ENCODE measurements at regions of chr1 and their contacts with region 1.

Region 1: DNA sequence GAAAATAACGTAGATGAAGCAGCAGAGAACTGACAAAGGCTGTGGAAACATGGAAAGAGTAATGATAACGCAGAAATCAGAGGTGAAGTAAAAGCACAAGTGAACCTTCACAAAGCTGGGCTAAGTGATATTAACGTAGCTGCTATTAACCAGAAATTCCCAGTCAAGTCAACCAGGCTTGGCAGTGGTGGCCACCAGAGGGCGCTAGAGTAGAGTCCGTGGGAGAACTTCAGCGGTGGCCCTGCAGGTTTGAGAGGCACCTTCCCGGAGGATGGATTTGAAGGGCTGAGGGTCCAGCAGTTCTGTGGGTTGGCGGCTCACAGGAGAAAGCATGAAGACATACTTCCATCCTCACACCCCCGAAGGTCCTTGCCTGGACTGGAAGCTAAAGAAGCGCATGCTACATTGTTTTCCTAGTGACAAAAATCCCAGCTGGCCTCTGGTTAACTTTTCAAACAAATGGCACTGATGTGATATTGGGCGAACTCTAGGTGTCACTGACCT is 81.7 kb upstream of the ZNF648 start:
- DNase-seq: peak; percentile 62 to 90 (median 80)
- ATAC-seq: peak; percentile 75
- H3K4me3 ChIP-seq: no peak overlapping the region
- H3K4me3 Mint-ChIP-seq: no peak overlapping the region
- H3K27ac ChIP-seq: no peak overlapping the region
- H3K27ac Mint-ChIP-seq: peak overlapping the region in 3 of 9 donors; percentile 5 to 8 (median 5)
- H3K4me1 ChIP-seq: no peaks in the 10 kb centered on the region
- H3K4me1 Mint-ChIP-seq: peaks cover 6 to 37% (median 11%) of the 10 kb centered on the region in 7 donors
- H3K27me3 ChIP-seq: no peaks in the 10 kb centered on the region
- H3K27me3 Mint-ChIP-seq: peaks cover 0 to 12% (median 5%) of the 10 kb centered on the region in 5 donors

Region 2: GRCh38 chr1:182129398-182129797 is 13.8 kb before region 1 on chr1:
- CTCF ChIA-PET with region 1: interaction called, 11 read pairs
- POLR2A ChIA-PET with region 1: no interaction called
- intact Hi-C with region 1: no loop called
- DNase-seq: no peak
- ATAC-seq: no peak
- H3K4me3 ChIP-seq: no peak overlapping the region
- H3K4me3 Mint-ChIP-seq: no peak overlapping the region
- H3K27ac ChIP-seq: no peak overlapping the region
- H3K27ac Mint-ChIP-seq: no peak overlapping the region
- H3K4me1 ChIP-seq: no peaks in the 10 kb centered on the region
- H3K4me1 Mint-ChIP-seq: no peaks in the 10 kb centered on the region
- H3K27me3 ChIP-seq: no peaks in the 10 kb centered on the region
- H3K27me3 Mint-ChIP-seq: peaks cover 0 to 8% (median 0%) of the 10 kb centered on the region in 5 donors

Region 3: DNA sequence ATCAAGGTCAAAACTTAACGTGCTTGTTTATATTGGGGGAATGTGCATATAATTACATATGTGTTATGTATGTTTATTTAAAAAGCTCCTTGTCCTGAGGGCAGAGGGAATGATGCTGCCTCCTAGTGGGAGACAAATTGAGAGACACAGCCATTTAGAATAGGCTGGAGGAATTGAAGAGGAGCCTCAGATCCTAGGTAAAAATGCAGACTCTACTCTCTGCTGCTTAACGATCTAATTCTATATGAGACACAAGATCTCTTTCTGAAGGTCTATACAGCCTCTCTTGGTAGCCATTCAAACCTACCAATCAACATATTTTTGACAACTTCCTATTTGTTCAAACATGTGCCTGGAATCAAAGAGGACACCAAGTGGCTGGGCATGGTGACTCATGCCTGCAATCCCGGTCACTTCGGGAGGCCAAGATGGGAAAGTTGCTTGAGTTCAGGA is 54.9 kb after region 1 on chr1:
- CTCF ChIA-PET with region 1: interaction called, 5 read pairs
- POLR2A ChIA-PET with region 1: no interaction called
- intact Hi-C with region 1: loop called in 1 of 2 experiments (anchors 5 kb)
- DNase-seq: no peak
- ATAC-seq: no peak
- H3K4me3 ChIP-seq: no peak overlapping the region
- H3K4me3 Mint-ChIP-seq: no peak overlapping the region
- H3K27ac ChIP-seq: no peak overlapping the region
- H3K27ac Mint-ChIP-seq: no peak overlapping the region
- H3K4me1 ChIP-seq: no peaks in the 10 kb centered on the region
- H3K4me1 Mint-ChIP-seq: peaks cover 0 to under 1% (median 0%) of the 10 kb centered on the region in 7 donors
- H3K27me3 ChIP-seq: no peaks in the 10 kb centered on the region
- H3K27me3 Mint-ChIP-seq: peaks cover 0 to 12% (median 5%) of the 10 kb centered on the region in 5 donors

Region 4: GRCh38 chr1:182259229-182259872 is 116.1 kb after region 1 on chr1:
- CTCF ChIA-PET with region 1: interaction called, 5 read pairs
- POLR2A ChIA-PET with region 1: no interaction called
- intact Hi-C with region 1: loop called in 1 of 2 experiments (anchors 1 kb)
- DNase-seq: peak; percentile 21 to 79 (median 65)
- ATAC-seq: peak; percentile 90
- H3K4me3 ChIP-seq: peak overlapping the region; percentile 2
- H3K4me3 Mint-ChIP-seq: peak overlapping the region; percentile 28 to 82 (median 75)
- H3K27ac ChIP-seq: peak overlapping the region; percentile 72
- H3K27ac Mint-ChIP-seq: peak overlapping the region; percentile 83 to 97 (median 91)
- H3K4me1 ChIP-seq: peaks cover 11 to 20% of the 10 kb centered on the region in 2 donors
- H3K4me1 Mint-ChIP-seq: peaks cover 23 to 50% (median 43%) of the 10 kb centered on the region in 7 donors
- H3K27me3 ChIP-seq: no peaks in the 10 kb centered on the region
- H3K27me3 Mint-ChIP-seq: no peaks in the 10 kb centered on the region

Region 5: GRCh38 chr1:182391362-182392044 is 248.3 kb after region 1 on chr1 and contains the start of gene GLUL:
- CTCF ChIA-PET with region 1: interaction called, 202 read pairs
- POLR2A ChIA-PET with region 1: interaction called, 16 read pairs
- intact Hi-C with region 1: loop called (anchors 1 kb)
- DNase-seq: peak; percentile 46 to 83 (median 63)
- ATAC-seq: peak; percentile 87
- H3K4me3 ChIP-seq: peak within 1 kb of the TSS; percentile 73
- H3K4me3 Mint-ChIP-seq: peak within 1 kb of the TSS; percentile 87 to 98 (median 94)
- H3K27ac ChIP-seq: peak within 1 kb of the TSS; percentile 64
- H3K27ac Mint-ChIP-seq: peak within 1 kb of the TSS; percentile 82 to 97 (median 89)
- H3K4me1 ChIP-seq: peaks cover 10 to 14% of the 10 kb centered on the region in 2 donors
- H3K4me1 Mint-ChIP-seq: peaks cover 17 to 45% (median 29%) of the 10 kb centered on the region in 7 donors
- H3K27me3 ChIP-seq: no peaks in the 10 kb centered on the region
- H3K27me3 Mint-ChIP-seq: peaks cover 0 to 25% (median 0%) of the 10 kb centered on the region in 5 donors
- total RNA-seq, gene GLUL: 66.2 to 357 (median 112) TPM

Region 6: GRCh38 chr1:182781841-182782586 is 638.8 kb after region 1 on chr1:
- CTCF ChIA-PET with region 1: no interaction called
- POLR2A ChIA-PET with region 1: no interaction called
- intact Hi-C with region 1: loop called (anchors 5 kb)
- DNase-seq: peak; percentile 33 to 72 (median 54)
- ATAC-seq: peak; percentile 84
- H3K4me3 ChIP-seq: no peak overlapping the region
- H3K4me3 Mint-ChIP-seq: no peak overlapping the region
- H3K27ac ChIP-seq: no peak overlapping the region
- H3K27ac Mint-ChIP-seq: peak overlapping the region in 3 of 9 donors; percentile 33 to 55 (median 39)
- H3K4me1 ChIP-seq: no peaks in the 10 kb centered on the region
- H3K4me1 Mint-ChIP-seq: peaks cover 4 to 20% (median 5%) of the 10 kb centered on the region in 7 donors
- H3K27me3 ChIP-seq: no peaks in the 10 kb centered on the region
- H3K27me3 Mint-ChIP-seq: peaks cover 0 to 12% (median 0%) of the 10 kb centered on the region in 5 donors

Measured in naive thymus-derived CD4-positive, alpha-beta T cell (primary cell).